A673 (cell line): ENCODE measurements at regions of chr7 and their contacts with region 1.

Region 1: DNA sequence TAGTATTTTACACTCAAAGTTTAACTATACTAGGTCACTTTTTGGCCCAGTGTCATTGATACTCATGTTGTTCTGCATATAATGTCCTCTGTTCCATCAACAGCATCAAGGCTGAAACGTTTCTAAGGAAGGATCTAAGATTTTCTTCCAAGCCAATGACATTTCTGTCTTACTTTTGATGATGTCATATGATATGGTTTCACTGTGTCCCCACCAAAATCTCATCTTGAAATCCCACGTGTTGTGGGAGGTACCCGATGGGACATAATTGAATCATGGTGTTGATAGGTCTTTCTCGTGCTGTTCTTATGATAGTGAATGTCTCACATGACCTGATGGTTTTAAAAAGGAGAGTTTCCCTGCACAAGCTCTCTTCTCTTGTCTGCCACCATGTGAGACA is 36.3 kb upstream of the TSPAN12 start:
- DNase-seq: no peak
- H3K4me3 ChIP-seq: no peak overlapping the region
- H3K27ac ChIP-seq: no peak overlapping the region
- H3K4me1 ChIP-seq: no peaks in the 10 kb centered on the region
- H3K27me3 ChIP-seq: no peaks in the 10 kb centered on the region
- CTCF ChIP-seq: no peak

Region 2: DNA sequence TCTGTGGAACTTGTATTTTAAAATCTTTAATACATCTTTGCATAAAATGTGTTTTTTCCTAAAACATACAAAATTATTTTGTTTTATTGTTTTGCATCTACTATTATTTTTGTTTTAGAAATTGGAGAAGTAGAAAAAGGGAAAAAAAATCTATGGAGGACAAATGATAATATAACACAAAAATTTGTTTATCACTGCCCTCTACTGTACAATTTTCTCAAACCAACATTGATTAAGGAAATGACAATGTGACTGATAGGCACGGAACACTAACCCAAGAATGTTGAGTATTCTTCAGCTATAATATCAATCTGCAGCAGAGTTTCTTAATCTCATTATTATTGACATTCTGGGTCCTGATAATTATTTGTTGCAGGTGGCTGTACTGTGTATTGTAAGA is 46.8 kb after region 1 on chr7:
- CTCF ChIA-PET with region 1: no interaction called
- POLR2A ChIA-PET with region 1: no interaction called
- intact Hi-C with region 1: loop called (anchors 1 kb)
- DNase-seq: peak; percentile 29
- H3K4me3 ChIP-seq: no peak overlapping the region
- H3K27ac ChIP-seq: no peak overlapping the region
- H3K4me1 ChIP-seq: no peaks in the 10 kb centered on the region
- H3K27me3 ChIP-seq: no peaks in the 10 kb centered on the region
- CTCF ChIP-seq: peak; percentile 58